Gastrocnemius medialis (tissue), 4 donors: ENCODE measurements at regions of chr19 and their contacts with region 1.

Region 1: GRCh38 chr19:34253699-34254551 is 429 bp upstream of the GARRE1 start:
- DNase-seq: peak in 1 of 2 donors; percentile 80
- ATAC-seq: peak; percentile 14
- H3K4me3 ChIP-seq: peak overlapping the region; percentile 81 to 100 (median 90)
- H3K27ac ChIP-seq: peak overlapping the region; percentile 96 to 100 (median 98)
- H3K4me1 ChIP-seq: peaks cover 30 to 34% of the 10 kb centered on the region in 2 donors
- H3K27me3 ChIP-seq: no peaks in the 10 kb centered on the region
- CTCF ChIP-seq: no peak
- POLR2A ChIP-seq: peak; percentile 92

Region 2: GRCh38 chr19:34120846-34121639 is 132.9 kb before region 1 on chr19:
- in situ Hi-C with region 1: no loop called
- intact Hi-C with region 1: no loop called
- DNase-seq: no peak
- ATAC-seq: no peak
- H3K4me3 ChIP-seq: no peak overlapping the region
- H3K27ac ChIP-seq: no peak overlapping the region
- H3K4me1 ChIP-seq: no peaks in the 10 kb centered on the region
- H3K27me3 ChIP-seq: no peaks in the 10 kb centered on the region
- CTCF ChIP-seq: peak in 4 of 5 experiments; percentile 17 to 47 (median 27)
- POLR2A ChIP-seq: no peak

Region 3: DNA sequence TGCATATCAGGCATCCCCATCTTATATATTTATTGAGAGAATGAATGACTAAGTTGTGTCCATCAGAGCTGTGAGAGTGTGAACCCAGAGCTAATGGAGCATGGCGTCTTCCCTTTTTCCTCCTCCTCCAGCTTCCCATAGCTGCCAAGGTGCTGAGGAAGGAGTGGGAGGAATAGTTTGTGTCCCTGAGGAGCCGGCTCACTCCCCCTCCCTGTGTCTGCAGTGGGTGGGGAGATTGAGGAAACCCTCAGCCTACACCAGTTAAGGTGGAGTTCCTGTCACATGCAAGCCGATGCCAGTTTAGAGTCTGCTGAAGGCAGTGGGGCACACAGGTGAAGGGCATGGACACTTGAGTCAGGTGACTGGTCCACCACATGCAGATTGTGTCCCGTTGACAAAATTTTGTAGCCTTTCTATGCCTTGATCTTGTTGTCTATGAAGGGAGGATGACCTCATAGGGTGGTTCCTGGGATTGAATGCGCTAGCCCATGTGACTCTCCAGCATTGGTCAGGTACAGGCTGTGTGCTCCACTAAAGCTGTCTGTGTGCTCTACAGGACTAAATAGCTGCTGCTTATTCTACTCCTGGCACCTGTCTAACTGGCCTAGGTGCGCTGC is 63.5 kb after region 1 on chr19:
- in situ Hi-C with region 1: loop called in 1 of 4 experiments (anchors 10 kb)
- intact Hi-C with region 1: no loop called
- DNase-seq: peak; percentile 31 to 46
- ATAC-seq: peak; percentile 55 to 76
- H3K4me3 ChIP-seq: no peak overlapping the region
- H3K27ac ChIP-seq: peak overlapping the region; percentile 71 to 84 (median 80)
- H3K4me1 ChIP-seq: peaks cover 68 to 77% of the 10 kb centered on the region in 2 donors
- H3K27me3 ChIP-seq: no peaks in the 10 kb centered on the region
- CTCF ChIP-seq: no peak
- POLR2A ChIP-seq: no peak

Region 4: GRCh38 chr19:34336781-34337271 is 82.9 kb after region 1 on chr19:
- in situ Hi-C with region 1: loop called in 2 of 4 experiments (anchors 25 kb)
- intact Hi-C with region 1: loop called (anchors 5 kb)
- DNase-seq: no peak
- ATAC-seq: peak in 1 of 2 donors; percentile 29
- H3K4me3 ChIP-seq: no peak overlapping the region
- H3K27ac ChIP-seq: peak overlapping the region; percentile 52 to 69 (median 60)
- H3K4me1 ChIP-seq: peaks cover 12 to 15% of the 10 kb centered on the region in 2 donors
- H3K27me3 ChIP-seq: no peaks in the 10 kb centered on the region
- CTCF ChIP-seq: peak; percentile 49 to 72 (median 57)
- POLR2A ChIP-seq: no peak